Activated CD4-positive, alpha-beta T cell treated with anti-CD3 and anti-CD28 coated beads, Interleukin-2, amount 10 ng/mL, durations not matched to agents 24 days and 14 days (primary cell): ENCODE measurements at regions of chr10 and their contacts with region 1.

Region 1: GRCh38 chr10:127715782-127716378 is 21.1 kb upstream of the FOXI2 start:
- DNase-seq: no peak
- H3K4me3 Mint-ChIP-seq: no peak overlapping the region
- H3K27ac Mint-ChIP-seq: no peak overlapping the region
- H3K4me1 Mint-ChIP-seq: no peaks in the 10 kb centered on the region
- H3K27me3 Mint-ChIP-seq: no peaks in the 10 kb centered on the region

Region 2: DNA sequence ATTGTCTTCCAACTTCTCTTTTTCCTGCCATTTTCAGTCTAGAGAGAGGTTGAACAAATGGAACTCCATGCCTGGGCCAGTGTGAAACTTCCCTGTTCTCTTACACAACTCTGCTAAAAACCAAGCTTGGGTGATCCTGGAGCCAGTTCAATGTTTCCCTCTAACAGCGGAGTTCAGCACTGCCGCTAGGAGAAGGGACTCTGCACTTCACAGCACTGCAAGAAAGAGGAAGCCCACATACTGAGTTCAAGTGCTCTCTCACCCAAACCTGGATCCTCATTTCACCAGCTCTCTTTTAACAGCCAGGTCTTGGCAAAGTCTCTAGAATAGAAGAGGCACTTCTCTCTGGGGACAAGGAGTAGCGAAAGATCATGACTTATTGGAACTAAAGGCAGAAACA is 39.9 kb after region 1 on chr10:
- intact Hi-C with region 1: no loop called
- DNase-seq: no peak
- H3K4me3 Mint-ChIP-seq: no peak overlapping the region
- H3K27ac Mint-ChIP-seq: no peak overlapping the region
- H3K4me1 Mint-ChIP-seq: no peaks in the 10 kb centered on the region
- H3K27me3 Mint-ChIP-seq: peaks cover 3% of the 10 kb centered on the region

Region 3: GRCh38 chr10:127853868-127854768 is 138.2 kb after region 1 on chr10:
- intact Hi-C with region 1: loop called (anchors 2 kb)
- DNase-seq: peak; percentile 80
- H3K4me3 Mint-ChIP-seq: no peak overlapping the region
- H3K27ac Mint-ChIP-seq: no peak overlapping the region
- H3K4me1 Mint-ChIP-seq: no peaks in the 10 kb centered on the region
- H3K27me3 Mint-ChIP-seq: no peaks in the 10 kb centered on the region

Region 4: DNA sequence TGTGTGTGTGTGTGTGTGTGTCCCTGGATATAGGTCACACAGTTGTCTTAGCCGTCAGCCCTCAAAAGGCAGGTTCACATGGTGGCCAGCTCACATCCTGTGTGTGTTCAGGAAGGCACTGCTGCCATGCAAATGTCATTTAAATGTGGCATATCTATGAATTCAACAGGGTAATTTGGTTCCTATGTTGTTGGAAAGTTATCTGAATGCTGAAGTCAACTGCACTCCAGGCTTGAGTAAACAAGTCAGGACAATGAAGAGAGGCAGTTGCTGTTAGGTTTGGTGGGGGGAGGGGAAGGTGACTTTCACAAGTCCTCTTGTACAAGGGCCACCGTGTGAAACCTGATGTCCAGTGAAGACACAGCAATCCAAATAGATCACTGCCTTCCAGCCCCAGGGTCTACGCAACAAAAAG is 252.2 kb after region 1 on chr10:
- intact Hi-C with region 1: no loop called
- DNase-seq: no peak
- H3K4me3 Mint-ChIP-seq: no peak overlapping the region
- H3K27ac Mint-ChIP-seq: no peak overlapping the region
- H3K4me1 Mint-ChIP-seq: peaks cover 2% of the 10 kb centered on the region
- H3K27me3 Mint-ChIP-seq: peaks cover 5% of the 10 kb centered on the region

Region 5: DNA sequence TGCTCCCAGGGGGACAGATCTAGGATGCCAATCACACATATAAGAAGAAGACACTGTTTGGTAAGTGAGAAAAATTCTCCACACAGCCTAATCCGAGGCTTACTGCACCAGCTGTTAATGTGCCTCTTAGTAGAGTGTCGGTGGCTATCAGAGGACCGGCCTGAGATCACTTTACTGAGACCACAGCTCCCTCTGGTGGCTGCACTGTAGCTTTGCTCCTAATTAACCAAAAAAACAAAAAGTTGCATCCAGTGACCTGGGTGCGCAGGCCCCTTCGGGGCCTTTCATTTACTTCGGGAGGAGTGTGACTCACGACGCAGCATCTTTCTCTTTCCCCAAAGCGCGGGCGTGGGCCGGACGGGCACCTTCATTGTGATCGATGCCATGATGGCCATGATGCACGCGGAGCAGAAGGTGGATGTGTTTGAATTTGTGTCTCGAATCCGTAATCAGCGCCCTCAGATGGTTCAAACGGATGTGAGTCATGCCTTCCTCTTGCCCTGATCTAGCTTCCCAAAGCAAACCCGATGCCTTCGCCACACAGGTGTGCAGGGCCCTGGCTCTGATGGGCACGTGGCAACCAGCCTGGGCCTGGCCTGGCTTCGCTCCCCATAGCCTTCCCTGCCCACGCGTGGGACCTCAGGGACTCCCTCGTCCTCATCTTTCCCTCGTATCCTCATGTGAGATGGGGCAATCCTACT is 353.6 kb after region 1 on chr10:
- intact Hi-C with region 1: loop called (anchors 2 kb)
- DNase-seq: peak; percentile 92
- H3K4me3 Mint-ChIP-seq: no peak overlapping the region
- H3K27ac Mint-ChIP-seq: peak overlapping the region; percentile 34
- H3K4me1 Mint-ChIP-seq: peaks cover 34% of the 10 kb centered on the region
- H3K27me3 Mint-ChIP-seq: no peaks in the 10 kb centered on the region